HEK293 (cell line): ENCODE measurements at regions of chr17 and their contacts with region 1.

Region 1: DNA sequence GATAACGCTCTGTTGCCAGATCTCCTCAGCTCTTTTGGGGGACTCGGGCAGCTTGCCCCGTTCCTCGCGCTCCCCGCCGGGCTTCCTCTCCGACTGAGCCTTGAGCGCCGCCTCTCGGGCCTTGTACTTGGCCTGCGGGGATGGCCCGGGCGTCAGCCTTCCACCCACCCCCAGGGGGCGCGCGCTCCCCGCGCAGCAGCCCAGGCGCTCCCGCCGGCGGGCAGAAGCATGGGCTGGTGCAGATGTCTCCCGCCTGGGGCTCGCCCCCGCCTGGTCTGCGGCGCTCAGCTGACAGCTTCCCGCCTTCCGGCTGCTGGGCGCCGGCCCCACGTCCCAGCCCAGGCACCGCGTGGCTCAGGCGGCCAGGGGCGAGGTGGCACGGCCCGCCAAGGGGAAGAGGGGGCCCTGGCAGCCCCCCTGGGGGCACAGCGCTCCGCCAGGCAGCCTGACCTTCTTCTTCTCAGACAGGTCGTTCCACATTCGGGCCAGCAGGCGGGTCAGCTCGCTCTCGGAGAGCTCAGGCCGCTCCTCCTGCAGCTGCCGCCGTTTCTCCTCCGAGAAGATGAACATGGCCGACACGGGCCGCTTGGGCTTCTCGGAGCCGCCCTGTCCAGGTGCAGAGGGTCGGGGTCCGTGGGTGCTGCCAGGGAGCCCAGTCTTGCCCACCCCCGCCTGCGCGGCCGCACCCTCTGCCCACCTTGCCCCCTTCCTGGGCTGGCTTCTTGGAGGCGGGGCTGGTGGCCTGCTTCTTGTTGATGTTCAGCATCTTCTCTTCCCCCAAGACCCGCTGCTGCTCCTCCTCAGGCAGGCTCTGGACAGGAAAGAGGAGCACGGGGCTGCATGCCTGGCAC is 8.9 kb downstream of the UBTF start:
- H3K4me3 ChIP-seq: no peak overlapping the region
- H3K27ac ChIP-seq: no peak overlapping the region; the same call in 1 of the 2 replicates
- H3K4me1 ChIP-seq: no peaks in the 10 kb centered on the region
- CTCF ChIP-seq: peak; percentile 78

Region 2: GRCh38 chr17:44137891-44138709 is 72.5 kb before region 1 on chr17:
- CTCF ChIA-PET with region 1: no interaction called
- POLR2A ChIA-PET with region 1: no interaction called
- H3K4me3 ChIP-seq: peak overlapping the region; percentile 25
- H3K27ac ChIP-seq: peak overlapping the region; percentile 53
- H3K4me1 ChIP-seq: peaks cover 11% of the 10 kb centered on the region
- CTCF ChIP-seq: peak; percentile 8; the same call in 1 of the 2 replicates

Region 3: GRCh38 chr17:44186307-44187130 is 24.0 kb before region 1 on chr17 and contains the start of gene TMUB2:
- CTCF ChIA-PET with region 1: interaction called, 10 read pairs
- POLR2A ChIA-PET with region 1: interaction called, 3 read pairs
- H3K4me3 ChIP-seq: peak within 1 kb of the TSS; percentile 77
- H3K27ac ChIP-seq: peak within 1 kb of the TSS; percentile 91
- H3K4me1 ChIP-seq: peaks cover 3% of the 10 kb centered on the region
- CTCF ChIP-seq: no peak

Region 4: GRCh38 chr17:44199553-44200477 is 10.8 kb before region 1 on chr17 and contains the start of gene ATXN7L3:
- CTCF ChIA-PET with region 1: interaction called, 6 read pairs
- POLR2A ChIA-PET with region 1: interaction called, 15 read pairs
- H3K4me3 ChIP-seq: peak within 1 kb of the TSS; percentile 75
- H3K27ac ChIP-seq: peak within 1 kb of the TSS; percentile 88
- H3K4me1 ChIP-seq: peaks cover 5% of the 10 kb centered on the region
- CTCF ChIP-seq: no peak

Region 5: DNA sequence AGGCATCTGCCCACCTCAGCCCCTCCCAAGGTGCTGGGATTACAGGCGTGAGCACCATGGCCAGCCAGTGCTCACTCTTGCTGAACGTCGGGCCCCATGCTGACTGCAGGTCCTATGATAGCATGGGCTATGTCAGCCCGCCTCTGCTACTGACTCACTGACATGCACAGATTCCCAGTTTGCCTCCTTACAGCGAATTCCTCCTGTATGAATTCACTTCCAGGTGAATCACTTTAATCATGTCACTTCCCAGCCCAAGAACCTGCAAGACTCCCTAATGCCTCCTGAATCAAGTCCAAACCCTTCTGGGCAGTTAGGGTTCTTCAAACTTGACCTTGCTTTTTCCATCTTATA is 25.0 kb after region 1 on chr17:
- CTCF ChIA-PET with region 1: no interaction called
- POLR2A ChIA-PET with region 1: no interaction called
- H3K4me3 ChIP-seq: no peak overlapping the region
- H3K27ac ChIP-seq: peak overlapping the region; percentile 53; the same call in 1 of the 2 replicates
- H3K4me1 ChIP-seq: peaks cover 10% of the 10 kb centered on the region
- CTCF ChIP-seq: no peak

Region 6: DNA sequence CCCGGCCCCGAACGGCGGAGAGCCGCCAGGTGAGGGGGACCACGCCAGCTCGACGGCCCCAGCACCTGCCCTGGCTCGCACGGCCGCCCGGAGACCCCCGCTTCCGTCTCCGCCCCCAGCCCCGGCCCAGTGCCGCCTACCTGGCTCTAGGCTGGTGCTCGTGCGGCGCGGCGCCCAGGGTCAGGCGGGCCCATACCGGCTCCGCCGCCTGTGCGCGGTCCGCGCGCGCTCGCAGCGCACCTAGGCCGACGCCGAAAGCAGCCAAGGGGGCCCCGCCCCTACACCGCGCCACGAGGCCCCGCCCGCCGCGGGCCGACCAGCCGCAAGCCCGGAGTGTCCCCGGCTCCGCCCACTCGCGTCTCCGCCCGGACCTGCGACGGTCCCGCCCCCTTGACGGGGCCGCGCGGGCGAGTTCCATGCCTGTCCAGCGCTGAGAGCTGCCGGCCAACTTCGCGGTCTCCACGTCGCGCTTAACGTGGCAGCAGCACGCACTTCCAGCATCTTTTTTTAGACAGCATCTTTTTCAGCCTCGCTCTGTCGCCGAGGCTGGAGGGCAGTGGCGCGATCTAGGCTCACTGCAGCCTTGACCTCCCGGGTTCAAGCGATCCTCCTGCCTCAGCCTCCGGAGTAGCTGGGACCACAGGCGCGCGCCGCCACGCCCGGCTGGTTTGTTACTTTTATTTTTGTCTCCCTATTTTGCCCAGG is 114.2 kb after region 1 on chr17 and contains the start of gene SLC25A39:
- CTCF ChIA-PET with region 1: interaction called, 10 read pairs
- POLR2A ChIA-PET with region 1: interaction called, 5 read pairs
- H3K4me3 ChIP-seq: peak within 1 kb of the TSS; percentile 88
- H3K27ac ChIP-seq: peak within 1 kb of the TSS; percentile 56; the same call in 1 of the 2 replicates
- H3K4me1 ChIP-seq: 0 out of 2 replicates have a peak, but pooled peaks cover 3% of the 10 kb centered on the region
- CTCF ChIP-seq: no peak

Region 7: DNA sequence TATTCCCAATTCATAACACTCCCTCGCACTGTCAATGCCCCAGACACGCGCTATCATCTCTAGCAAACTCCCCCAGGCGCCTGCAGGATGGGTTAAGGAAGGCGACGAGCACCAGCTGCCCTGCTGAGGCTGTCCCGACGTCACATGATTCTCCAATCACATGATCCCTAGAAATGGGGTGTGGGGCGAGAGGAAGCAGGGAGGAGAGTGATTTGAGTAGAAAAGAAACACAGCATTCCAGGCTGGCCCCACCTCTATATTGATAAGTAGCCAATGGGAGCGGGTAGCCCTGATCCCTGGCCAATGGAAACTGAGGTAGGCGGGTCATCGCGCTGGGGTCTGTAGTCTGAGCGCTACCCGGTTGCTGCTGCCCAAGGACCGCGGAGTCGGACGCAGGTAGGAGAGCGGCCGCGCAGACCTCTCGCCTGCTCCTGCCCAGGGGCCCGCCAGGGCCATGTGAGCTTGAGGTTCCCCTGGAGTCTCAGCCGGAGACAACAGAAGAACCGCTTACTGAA is 134.4 kb after region 1 on chr17 and contains the start of gene GRN:
- CTCF ChIA-PET with region 1: interaction called, 21 read pairs
- POLR2A ChIA-PET with region 1: interaction called, 4 read pairs
- H3K4me3 ChIP-seq: peak within 1 kb of the TSS; percentile 82
- H3K27ac ChIP-seq: peak within 1 kb of the TSS; percentile 40; the same call in 1 of the 2 replicates
- H3K4me1 ChIP-seq: no peaks in the 10 kb centered on the region
- CTCF ChIP-seq: no peak

Region 8: DNA sequence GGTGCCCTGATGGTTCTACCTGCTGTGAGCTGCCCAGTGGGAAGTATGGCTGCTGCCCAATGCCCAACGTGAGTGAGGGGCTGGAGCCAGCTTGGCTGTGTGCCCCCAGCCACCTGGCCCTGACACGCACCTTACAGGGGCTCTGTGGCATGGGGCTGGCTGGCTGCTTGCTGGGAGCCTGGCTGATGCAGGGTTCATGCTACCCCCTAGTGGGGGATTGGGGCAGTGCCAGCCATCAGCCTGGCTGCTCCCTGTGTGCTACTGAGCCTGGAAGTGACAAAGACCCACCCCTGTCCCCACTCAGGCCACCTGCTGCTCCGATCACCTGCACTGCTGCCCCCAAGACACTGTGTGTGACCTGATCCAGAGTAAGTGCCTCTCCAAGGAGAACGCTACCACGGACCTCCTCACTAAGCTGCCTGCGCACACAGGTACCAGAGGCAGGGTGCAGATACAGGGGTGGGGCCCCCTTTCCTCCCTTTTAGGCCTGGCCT is 140.2 kb after region 1 on chr17:
- CTCF ChIA-PET with region 1: interaction called, 21 read pairs
- POLR2A ChIA-PET with region 1: interaction called, 4 read pairs
- H3K4me3 ChIP-seq: no peak overlapping the region
- H3K27ac ChIP-seq: no peak overlapping the region
- H3K4me1 ChIP-seq: no peaks in the 10 kb centered on the region
- CTCF ChIP-seq: peak; percentile 86